ENCODE measurements at regions of chr1 and their contacts with region 1.

Region 1: GRCh38 chr1:22437573-22437972 is 14.1 kb upstream of the ZBTB40 start:
- DNase-seq: no peak
- ATAC-seq: no peak
- H3K4me3 ChIP-seq: no peak overlapping the region
- H3K27ac ChIP-seq: no peak overlapping the region
- H3K4me1 ChIP-seq: peaks cover 0 to 6% (median 0%) of the 10 kb centered on the region in 9 donors
- H3K27me3 ChIP-seq: peaks cover 0 to 7% (median 0%) of the 10 kb centered on the region in 7 donors
- CTCF ChIP-seq: no peak

Region 2: DNA sequence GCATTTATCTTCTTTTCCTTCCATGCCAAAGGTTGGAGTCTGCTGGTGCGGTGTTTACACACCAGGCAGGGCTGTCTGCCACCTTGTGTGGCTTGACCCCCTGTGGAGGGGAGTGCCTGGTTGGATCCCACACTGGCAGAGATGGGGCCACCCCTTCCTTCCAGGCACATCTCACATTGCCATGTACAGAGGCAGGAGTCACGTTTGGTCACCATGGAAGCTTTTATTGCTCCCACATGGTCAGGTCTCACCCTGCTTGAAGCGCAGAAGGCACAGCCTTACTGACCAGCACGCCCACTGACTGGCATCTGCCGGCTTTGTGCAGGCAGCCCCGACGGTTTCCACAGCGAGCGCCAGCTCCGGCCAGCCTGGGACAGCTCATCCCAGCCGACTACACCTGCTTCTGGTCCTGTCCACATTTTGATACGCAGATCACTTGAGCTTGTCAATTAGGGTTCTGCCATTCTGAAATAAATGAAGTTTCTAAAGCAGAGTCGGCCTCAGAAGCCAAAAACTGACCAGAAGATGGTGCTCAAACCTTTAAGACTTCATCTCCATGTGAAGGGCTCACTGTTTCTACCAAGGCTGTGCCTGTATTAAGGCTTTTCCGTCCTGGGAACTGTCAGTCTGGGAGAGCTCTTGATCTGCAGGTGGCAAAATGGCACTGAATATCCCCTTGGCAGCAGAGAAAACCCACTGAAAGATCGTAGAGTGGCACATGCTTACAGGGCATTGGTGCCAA is 90.2 kb after region 1 on chr1:
- intact Hi-C with region 1: loop called in 1 of 10 experiments (anchors 10 kb)
- DNase-seq: no peak
- ATAC-seq: no peak
- H3K4me3 ChIP-seq: no peak overlapping the region
- H3K27ac ChIP-seq: no peak overlapping the region
- H3K4me1 ChIP-seq: peaks cover 3 to 23% (median 18%) of the 10 kb centered on the region in 9 donors
- H3K27me3 ChIP-seq: no peaks in the 10 kb centered on the region
- CTCF ChIP-seq: peak in 5 of 9 donors; percentile 24 to 35 (median 29)

Region 3: DNA sequence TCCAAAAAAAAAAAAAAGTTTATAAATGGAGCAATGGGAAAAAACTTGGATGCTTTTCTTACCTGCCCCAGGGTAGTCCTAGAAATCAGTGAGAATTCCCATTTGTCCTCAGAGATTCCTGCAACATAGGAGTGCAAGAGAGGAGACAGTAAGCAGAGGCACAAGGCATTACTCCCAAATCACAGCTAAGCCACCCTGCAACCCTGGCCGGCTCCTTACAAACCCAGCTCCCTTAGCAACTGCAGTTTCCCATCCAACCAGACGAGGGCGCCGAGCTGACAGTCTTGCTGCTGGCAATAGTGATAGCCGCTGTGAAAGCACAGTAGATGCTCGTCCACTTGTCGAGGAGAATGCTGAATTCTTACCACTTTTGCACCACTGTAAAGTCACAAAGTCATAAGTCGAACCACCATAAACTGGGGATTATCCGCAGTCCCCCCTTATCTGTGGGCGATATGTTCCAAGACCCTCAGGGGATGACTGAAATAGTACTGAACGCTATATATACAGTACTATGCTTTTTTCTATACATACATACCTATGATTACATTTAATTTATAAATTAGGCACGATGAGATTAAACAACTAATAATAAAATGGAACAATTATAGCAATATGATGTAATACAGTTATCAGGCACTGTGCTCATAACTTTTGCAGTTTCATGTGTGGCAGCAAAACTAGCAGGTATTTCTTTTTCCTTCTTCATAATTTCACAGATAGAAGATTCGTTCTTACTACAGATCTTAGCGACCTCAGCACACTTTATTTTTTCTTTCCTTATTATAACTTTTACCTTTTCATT is 1334.7 kb after region 1 on chr1:
- intact Hi-C with region 1: no loop called
- DNase-seq: peak; percentile 86
- ATAC-seq: peak; percentile 65 to 90 (median 82)
- H3K4me3 ChIP-seq: no peak overlapping the region
- H3K27ac ChIP-seq: no peak overlapping the region
- H3K4me1 ChIP-seq: peaks cover 0 to 54% (median 13%) of the 10 kb centered on the region in 9 donors
- H3K27me3 ChIP-seq: no peaks in the 10 kb centered on the region
- CTCF ChIP-seq: peak; percentile 85 to 96 (median 92)

Measured in heart right ventricle (tissue), 16 donors.